ENCODE measurements at regions of chr3 and their contacts with region 1.

Region 1: GRCh38 chr3:192816351-192816750 is 89.0 kb upstream of the FGF12 start:
- DNase-seq: no peak
- H3K4me3 ChIP-seq: no peak overlapping the region
- H3K27ac ChIP-seq: no peak overlapping the region
- H3K27me3 ChIP-seq: no peaks in the 10 kb centered on the region
- CTCF ChIP-seq: peak; percentile 70

Region 2: DNA sequence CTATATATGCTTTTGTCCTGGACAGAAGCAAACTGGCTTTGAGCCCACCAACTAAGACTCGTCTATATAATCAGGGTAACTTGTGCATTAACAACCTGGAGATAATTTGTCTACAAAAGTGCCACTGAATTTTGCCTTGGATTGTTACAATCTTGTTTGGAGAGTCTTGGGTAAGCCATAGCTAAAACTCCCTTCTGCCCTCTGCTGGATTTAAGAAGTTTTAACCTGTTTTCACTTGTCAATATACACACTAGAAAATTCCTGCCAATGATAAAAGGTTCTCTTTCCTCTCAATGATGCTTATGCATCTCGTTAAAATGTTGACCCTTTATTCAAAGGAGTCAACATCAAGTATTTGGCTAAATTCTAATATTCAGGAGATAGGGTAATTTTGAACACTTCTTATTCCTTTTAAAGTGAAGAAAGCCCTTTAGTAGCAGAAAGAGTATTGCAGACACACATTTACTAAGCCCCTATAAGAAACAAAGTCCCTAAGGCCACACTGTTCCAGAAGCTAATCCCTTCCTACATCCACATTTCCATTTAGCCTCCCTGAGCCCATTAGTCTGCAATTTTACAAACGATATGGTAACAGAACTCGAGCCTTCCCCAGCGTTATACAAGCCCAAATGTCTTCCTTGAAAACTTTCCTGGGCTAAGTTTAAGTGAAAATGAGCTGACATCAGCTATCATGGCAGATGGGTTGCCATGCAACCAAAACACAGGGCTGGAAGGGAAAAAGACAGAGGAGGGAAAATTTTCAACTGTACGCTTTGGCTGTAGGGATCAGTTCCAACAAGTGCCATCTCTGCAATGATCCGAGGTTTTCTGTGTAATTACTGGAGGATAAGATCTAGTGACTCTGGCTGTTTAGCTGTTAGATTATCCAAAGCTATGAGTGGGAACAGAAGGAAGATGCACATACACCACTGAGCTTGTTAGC is 13.1 kb before region 1 on chr3:
- CTCF ChIA-PET with region 1: interaction called, 40 read pairs
- POLR2A ChIA-PET with region 1: no interaction called
- DNase-seq: peak; percentile 6
- H3K4me3 ChIP-seq: no peak overlapping the region
- H3K27ac ChIP-seq: no peak overlapping the region
- H3K27me3 ChIP-seq: no peaks in the 10 kb centered on the region
- CTCF ChIP-seq: peak; percentile 69

Region 3: DNA sequence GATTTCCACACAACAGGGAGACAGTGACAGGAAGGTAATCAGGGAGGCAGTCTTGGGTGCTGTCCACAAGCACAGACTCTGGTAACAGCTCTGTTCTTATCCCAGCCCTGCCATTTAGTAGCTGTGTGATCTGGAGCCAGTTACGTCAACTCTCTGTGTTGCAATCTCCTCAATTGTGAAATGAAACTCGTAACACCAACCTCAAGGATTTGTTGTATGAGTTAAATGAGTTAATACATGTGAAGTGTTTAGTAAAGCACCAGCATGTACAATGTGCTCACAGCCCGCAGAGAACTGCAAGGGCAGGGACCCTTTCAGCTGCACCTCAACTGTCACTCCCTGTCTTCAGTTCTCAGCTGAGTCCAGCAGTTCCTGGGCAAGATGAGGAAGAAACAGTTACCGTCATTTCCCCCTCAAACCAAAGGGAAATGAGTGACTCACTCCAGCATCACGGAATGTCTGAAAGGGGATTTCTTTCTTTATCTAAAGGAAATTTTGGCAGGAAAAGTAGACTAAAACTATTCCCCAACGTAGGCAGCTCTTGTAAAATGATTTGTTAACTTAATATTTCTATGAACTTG is 141.2 kb after region 1 on chr3:
- CTCF ChIA-PET with region 1: interaction called, 11 read pairs
- POLR2A ChIA-PET with region 1: no interaction called
- DNase-seq: peak; percentile 76
- H3K4me3 ChIP-seq: peak overlapping the region; percentile 58
- H3K27ac ChIP-seq: peak overlapping the region; percentile 96
- H3K27me3 ChIP-seq: no peaks in the 10 kb centered on the region
- CTCF ChIP-seq: no peak

Region 4: DNA sequence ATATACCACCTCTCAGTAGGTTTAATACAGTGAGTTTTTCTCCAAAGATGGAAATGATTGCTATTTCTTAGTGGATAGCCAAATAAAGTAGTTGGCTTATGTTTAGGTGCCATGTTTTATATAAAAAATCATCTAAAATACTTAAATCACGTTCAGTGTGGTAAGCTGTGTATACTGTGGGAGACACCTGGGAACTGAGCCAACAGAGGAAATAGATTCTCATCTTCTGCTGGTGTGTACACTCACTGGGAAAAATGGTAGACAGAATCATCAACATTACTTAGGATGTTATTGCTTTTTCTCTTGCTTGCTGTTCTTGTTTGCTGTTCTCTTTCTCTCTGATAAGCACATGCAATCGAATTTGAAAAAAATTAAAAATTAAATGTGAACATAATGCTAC is 213.9 kb after region 1 on chr3:
- CTCF ChIA-PET with region 1: interaction called, 16 read pairs
- POLR2A ChIA-PET with region 1: no interaction called
- DNase-seq: no peak
- H3K4me3 ChIP-seq: no peak overlapping the region
- H3K27ac ChIP-seq: no peak overlapping the region
- H3K27me3 ChIP-seq: peaks cover 5% of the 10 kb centered on the region
- CTCF ChIP-seq: no peak

Region 5: GRCh38 chr3:193078996-193079753 is 262.8 kb after region 1 on chr3:
- CTCF ChIA-PET with region 1: interaction called, 12 read pairs
- POLR2A ChIA-PET with region 1: no interaction called
- DNase-seq: no peak
- H3K4me3 ChIP-seq: no peak overlapping the region
- H3K27ac ChIP-seq: no peak overlapping the region
- H3K27me3 ChIP-seq: no peaks in the 10 kb centered on the region
- CTCF ChIP-seq: no peak

Region 6: DNA sequence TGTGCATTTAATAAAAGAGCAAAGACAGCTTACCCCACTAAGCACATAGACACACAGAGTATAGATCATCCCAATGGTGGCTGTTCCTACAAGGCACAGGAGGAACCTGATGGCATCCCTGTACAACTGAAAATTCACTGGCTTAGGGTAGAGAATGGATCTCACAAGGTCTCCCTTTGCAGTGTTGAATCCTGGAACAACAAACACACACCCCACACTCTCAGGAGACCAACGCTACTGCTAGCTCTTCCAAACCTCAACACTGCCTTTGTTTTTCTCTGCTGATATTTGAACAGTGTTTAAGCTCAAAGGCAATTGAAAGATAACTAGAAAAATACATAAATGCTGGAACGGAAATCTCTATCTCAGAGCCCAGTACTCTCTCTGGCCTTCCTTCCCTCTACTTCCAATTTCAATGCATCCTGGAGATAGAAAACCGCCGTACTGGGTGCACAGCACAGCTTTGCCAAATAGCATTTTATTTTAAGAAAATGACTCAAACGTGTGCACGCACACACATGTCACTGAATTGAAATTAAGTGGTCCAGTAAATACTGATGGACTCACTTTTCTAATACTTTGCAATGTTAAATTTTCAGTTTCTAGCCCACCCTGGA is 649.7 kb after region 1 on chr3:
- CTCF ChIA-PET with region 1: interaction called, 22 read pairs
- POLR2A ChIA-PET with region 1: no interaction called
- DNase-seq: no peak
- H3K4me3 ChIP-seq: no peak overlapping the region
- H3K27ac ChIP-seq: no peak overlapping the region
- H3K27me3 ChIP-seq: no peaks in the 10 kb centered on the region
- CTCF ChIP-seq: no peak